Endothelial cell of umbilical vein (primary cell): ENCODE measurements at regions of chr6 and their contacts with region 1.

Region 1: DNA sequence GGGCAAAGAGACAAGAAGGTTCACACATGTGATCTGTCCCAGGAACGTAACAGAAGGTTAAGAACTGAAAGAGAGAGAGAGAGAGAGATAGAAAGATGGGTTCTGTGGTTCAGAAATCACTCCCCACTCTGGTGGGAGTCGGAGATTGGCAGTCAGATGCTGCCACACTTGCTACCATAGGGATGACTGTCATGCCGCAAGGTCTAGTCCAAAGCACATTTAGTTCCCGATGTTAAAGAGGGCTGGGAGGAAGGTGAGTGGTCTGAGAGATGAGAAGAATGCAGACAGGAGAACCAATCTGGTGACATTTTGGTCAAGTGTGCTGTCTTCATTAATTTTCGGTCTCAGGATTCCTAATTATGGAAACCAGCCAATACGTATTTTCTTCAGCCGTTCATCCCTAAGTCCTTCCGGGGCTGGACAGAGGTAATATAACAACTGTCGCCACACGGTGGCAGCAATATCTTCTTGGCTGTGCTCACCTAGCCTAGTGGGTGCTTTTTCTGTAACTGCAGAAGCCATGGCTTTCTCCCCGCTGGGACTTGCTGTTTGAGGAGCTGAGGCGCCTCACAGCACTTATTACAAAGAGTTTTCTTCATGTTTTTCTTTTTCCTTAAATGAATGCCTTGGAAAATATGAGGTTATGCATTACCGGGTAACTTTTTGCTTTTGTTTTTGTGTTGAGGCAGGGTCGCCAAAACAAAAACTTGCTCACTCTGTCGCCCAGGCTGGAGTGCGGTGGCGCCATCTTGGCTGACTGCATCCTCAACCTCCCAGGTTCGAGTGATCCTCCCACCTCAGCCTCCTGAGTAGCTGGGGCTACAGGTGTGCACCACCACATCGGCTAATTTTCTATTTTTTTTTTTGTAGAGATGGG is 46.0 kb downstream of the SLC35D3 start:
- DNase-seq: peak; percentile 65
- H3K4me3 ChIP-seq: no peak overlapping the region
- H3K27ac ChIP-seq: no peak overlapping the region
- H3K4me1 ChIP-seq: no peaks in the 10 kb centered on the region
- H3K27me3 ChIP-seq: peaks cover 0 to 10% of the 10 kb centered on the region in 2 experiments
- CTCF ChIP-seq: peak; percentile 55 to 57
- POLR2A ChIP-seq: no peak

Region 2: DNA sequence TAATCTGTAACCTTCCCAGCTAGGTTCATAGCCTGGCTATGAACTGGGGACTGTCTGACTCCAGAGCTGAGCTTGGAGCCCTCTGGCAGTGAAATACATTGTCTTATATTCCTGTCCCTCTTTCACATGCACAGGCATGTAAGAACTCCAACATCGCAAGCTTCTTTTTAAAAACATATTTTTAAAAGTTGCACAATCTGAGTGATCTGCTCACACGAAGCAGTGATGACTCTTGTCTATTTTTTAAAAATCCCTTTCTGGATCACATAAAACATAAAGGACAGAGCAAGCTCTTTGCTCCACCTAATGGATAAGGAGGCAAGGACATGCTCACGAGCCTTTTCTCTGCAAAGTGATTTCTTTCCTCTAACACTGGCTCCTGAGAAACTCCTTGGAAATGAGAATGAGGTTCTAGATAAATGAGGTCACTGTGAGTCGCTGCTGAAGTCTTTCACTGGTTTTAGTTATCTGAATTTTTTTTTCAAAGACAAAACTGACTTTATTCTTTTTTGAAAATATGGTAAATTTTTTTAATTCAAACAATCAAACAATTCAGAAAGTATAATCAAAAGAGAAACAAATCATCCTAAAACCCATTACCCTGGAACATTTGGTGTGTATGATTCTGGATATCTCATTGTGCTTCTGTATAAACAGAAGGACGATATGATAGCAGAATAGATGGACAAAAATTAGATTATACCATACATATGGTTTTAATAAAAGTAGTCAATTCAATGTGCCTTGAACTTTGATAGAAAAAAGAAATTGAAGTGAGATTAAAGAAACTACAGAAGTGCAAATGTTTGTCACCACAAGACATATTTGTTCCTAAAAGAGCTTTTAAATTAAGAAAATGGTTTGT is 45.9 kb after region 1 on chr6:
- CTCF ChIA-PET with region 1: interaction called, 8 read pairs
- POLR2A ChIA-PET with region 1: no interaction called
- dilution Hi-C with region 1: no loop called
- intact Hi-C with region 1: loop called (anchors 1 kb)
- DNase-seq: peak; percentile 27
- H3K4me3 ChIP-seq: no peak overlapping the region
- H3K27ac ChIP-seq: no peak overlapping the region
- H3K4me1 ChIP-seq: no peaks in the 10 kb centered on the region
- H3K27me3 ChIP-seq: peaks cover 5 to 23% of the 10 kb centered on the region in 2 experiments
- CTCF ChIP-seq: peak; percentile 6 to 40
- POLR2A ChIP-seq: no peak